HepG2 (cell line): ENCODE measurements at regions of chr9 and their contacts with region 1.

Region 1: DNA sequence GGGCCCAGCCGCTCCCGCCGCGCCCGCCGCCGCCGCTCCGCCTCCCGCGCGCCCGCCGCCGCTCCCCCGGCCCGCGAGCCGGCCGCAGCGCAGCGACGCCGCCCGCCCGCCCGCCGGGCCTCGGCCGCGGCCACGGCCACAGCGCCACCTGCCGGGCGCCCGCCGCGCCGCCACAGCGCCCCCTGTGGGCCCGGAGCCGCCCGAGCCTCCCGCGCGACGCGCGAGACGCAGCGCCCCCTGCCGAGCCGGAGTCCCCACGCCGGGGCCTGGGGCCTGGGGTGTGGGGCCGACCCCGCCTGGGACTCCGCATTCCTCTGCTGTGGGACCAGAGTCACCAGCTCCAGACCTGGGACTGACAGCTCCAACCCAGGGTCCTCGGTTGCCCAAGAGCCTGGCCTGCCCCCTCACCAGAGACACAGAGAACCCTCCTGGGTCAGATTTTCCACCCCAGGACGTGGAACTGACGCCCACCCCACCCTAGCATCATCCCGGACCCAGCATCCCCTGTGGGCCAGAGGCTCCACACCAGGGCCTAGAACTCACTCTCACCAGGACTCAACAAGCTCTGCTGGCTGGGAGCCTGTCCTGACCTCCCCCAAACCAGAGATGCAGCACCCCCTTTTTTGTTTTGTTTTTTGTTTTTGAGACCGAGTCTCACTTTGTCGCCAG is at the start of gene RAPGEF1:
- DNase-seq: no peak
- ATAC-seq: peak; percentile 29
- H3K4me3 ChIP-seq: peak within 1 kb of the TSS; percentile 69 to 82 (median 80)
- H3K27ac ChIP-seq: peak within 1 kb of the TSS; percentile 37
- H3K4me1 ChIP-seq: peaks cover 59% of the 10 kb centered on the region
- H3K27me3 ChIP-seq: no peaks in the 10 kb centered on the region
- CTCF ChIP-seq: peak; percentile 76
- EP300 ChIP-seq: no peak
- POLR2A ChIP-seq: no peak
- RAD21 ChIP-seq: peak; percentile 96
- total RNA-seq, gene RAPGEF1: 21.2 and 21.7 TPM in 2 replicates

Region 2: DNA sequence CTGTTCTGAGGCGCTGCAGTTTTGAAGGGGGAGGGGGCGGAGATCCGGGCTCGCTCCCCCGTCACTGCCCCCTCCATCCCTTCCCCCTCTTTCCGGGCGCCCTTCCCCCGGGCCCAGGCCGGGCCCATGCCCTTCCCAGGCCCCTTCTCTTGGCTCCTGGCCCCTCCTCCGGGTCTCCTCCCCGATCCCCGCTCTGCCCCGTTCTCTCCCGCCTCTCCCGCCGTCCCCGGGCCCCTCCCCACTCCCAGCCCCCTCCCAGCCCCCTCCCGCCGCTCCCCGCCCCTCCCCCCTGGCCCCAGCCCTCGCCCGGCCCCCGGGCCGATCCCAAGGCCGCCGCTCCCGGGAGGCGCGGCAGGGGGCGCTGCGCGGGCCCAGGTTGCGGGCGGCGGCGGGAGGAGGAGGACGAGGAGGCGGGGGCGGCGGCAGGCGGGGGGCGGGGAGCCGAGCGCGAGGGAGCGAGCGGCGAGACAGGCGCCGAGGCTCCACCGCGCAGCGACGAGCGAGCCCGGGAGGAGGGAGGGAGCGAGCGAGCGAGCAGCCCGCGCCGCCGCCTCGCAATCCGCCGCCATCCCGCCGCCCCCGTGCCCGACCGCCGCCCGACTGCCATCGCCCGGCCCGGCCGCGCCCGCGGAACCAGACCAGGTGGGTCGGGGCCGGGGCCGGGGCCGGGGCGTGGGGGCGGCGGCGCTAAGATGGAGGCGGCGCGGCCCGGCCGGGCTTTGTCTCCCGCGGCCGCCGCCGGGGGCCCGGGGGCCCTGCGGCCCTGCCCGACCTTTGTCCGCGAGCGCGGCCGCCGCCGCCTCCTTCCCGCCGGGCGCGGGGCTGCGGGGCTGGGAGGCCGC is 346.3 kb before region 1 on chr9 and contains the start of gene PRRC2B:
- CTCF ChIA-PET with region 1: no interaction called
- POLR2A ChIA-PET with region 1: no interaction called
- in situ Hi-C with region 1: loop called (anchors 25 kb)
- intact Hi-C with region 1: no loop called
- DNase-seq: peak; percentile 67
- ATAC-seq: peak; percentile 74
- H3K4me3 ChIP-seq: peak within 1 kb of the TSS; percentile 73 to 88 (median 74)
- H3K27ac ChIP-seq: peak within 1 kb of the TSS; percentile 85
- H3K4me1 ChIP-seq: peaks cover 61% of the 10 kb centered on the region
- H3K27me3 ChIP-seq: no peaks in the 10 kb centered on the region
- CTCF ChIP-seq: peak; percentile 55; the same call in 1 of the 2 replicates
- EP300 ChIP-seq: no peak; a peak in 1 of 4 replicates
- POLR2A ChIP-seq: peak; percentile 57 to 86; a peak in 3 of 4 replicates
- RAD21 ChIP-seq: peak; percentile 21; the same call in 1 of the 2 replicates
- total RNA-seq, gene PRRC2B: 37.4 TPM in 2 replicates

Region 3: DNA sequence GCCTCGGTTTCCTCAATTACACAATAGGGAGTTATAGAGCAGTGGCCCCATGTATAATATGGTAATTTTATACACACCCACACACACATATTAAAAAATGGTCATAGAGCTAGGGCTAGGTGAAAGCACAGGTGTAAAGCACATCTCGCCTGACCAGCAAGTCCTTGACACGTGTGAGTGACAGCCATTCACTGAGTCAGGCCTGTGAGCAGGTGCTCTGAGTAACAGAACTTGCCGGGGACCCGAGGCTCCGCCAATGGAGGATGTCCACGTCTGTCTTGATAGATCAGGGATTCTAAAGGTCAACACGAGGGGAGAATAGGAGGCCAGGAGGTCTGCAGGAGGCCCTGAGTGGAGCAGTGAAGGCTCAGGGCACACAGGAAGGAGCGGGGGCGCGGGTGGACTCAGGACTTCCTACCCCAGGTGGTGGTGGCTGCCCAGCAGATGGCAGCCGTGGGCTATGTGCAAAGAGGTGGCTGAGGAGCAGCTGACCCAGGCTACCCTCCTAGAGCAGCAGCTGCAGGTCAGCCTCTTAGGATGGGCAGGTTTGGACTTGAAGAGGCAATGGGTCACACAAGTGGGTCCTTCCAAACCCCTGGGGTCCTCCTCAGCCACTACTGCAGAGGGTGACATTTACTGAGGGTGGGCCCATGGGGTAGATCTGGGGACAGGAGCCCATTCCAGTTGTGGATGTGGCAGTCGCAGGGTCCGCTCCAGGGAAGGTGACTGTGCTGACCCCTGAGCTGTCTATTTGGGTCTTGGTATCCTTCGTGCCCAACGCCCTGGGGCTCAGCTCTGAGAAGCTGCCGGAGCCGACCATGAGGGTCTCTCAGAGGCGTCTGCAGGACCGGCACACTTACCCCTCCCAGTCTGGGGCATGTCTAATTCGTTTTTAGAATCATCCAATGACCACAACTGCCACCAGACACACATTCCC is 148.9 kb before region 1 on chr9:
- CTCF ChIA-PET with region 1: interaction called, 185 read pairs
- POLR2A ChIA-PET with region 1: interaction called, 3 read pairs
- in situ Hi-C with region 1: loop called (anchors 5 kb)
- intact Hi-C with region 1: no loop called
- DNase-seq: peak; percentile 61
- ATAC-seq: peak; percentile 94
- H3K4me3 ChIP-seq: no peak overlapping the region
- H3K27ac ChIP-seq: no peak overlapping the region
- H3K4me1 ChIP-seq: peaks cover 14% of the 10 kb centered on the region
- H3K27me3 ChIP-seq: no peaks in the 10 kb centered on the region
- CTCF ChIP-seq: peak; percentile 97
- EP300 ChIP-seq: no peak
- POLR2A ChIP-seq: no peak
- RAD21 ChIP-seq: peak; percentile 96

Region 4: DNA sequence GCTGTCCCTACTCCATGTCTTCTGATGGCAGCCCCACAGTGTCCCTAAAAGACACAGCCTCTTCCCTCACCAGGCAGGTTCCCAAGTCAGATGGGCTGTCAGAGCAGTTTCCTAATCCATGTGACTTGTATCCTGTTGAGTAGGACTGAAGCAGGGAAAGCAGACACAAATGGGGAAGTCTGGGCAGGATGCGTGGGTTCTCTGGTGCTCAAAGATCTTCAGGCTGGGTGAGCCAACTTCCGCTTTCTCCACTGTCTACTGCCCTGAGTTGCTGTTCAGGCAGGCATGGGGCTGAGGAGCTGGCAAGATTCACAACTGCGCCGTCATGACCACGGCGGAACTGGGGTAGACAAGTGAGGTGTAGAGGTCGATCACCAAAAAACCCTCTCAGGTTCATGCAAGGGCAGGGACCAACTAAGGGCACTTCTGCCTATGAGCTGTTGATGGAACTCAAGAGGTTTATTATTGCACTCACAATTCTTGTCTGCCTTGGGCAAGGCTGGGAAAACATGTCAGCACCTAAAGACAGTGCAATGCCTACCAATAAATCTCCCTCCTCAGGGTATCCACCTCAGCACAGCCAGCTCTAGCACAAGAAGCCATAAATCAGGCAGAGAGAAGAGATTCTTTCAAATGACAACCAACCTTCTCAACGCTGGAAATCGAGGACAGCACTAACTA is 83.6 kb before region 1 on chr9:
- CTCF ChIA-PET with region 1: interaction called, 8 read pairs
- POLR2A ChIA-PET with region 1: interaction called, 3 read pairs
- in situ Hi-C with region 1: loop called (anchors 10 kb)
- intact Hi-C with region 1: no loop called
- DNase-seq: no peak
- ATAC-seq: no peak
- H3K4me3 ChIP-seq: no peak overlapping the region
- H3K27ac ChIP-seq: no peak overlapping the region
- H3K4me1 ChIP-seq: peaks cover 51% of the 10 kb centered on the region
- H3K27me3 ChIP-seq: no peaks in the 10 kb centered on the region
- CTCF ChIP-seq: no peak
- EP300 ChIP-seq: no peak
- POLR2A ChIP-seq: no peak
- RAD21 ChIP-seq: no peak

Region 5: GRCh38 chr9:131678499-131679111 is 61.5 kb before region 1 on chr9:
- CTCF ChIA-PET with region 1: interaction called, 12 read pairs
- POLR2A ChIA-PET with region 1: interaction called, 3 read pairs
- in situ Hi-C with region 1: no loop called
- intact Hi-C with region 1: no loop called
- DNase-seq: peak; percentile 56
- ATAC-seq: peak; percentile 89
- H3K4me3 ChIP-seq: no peak overlapping the region
- H3K27ac ChIP-seq: no peak overlapping the region
- H3K4me1 ChIP-seq: peaks cover 61% of the 10 kb centered on the region
- H3K27me3 ChIP-seq: no peaks in the 10 kb centered on the region
- CTCF ChIP-seq: no peak
- EP300 ChIP-seq: no peak
- POLR2A ChIP-seq: no peak
- RAD21 ChIP-seq: no peak

Region 6: GRCh38 chr9:131704141-131704983 is 35.8 kb before region 1 on chr9:
- CTCF ChIA-PET with region 1: interaction called, 10 read pairs
- POLR2A ChIA-PET with region 1: no interaction called
- in situ Hi-C with region 1: no loop called
- intact Hi-C with region 1: loop called (anchors 2 kb)
- DNase-seq: no peak
- ATAC-seq: no peak
- H3K4me3 ChIP-seq: no peak overlapping the region
- H3K27ac ChIP-seq: peak overlapping the region; percentile 79
- H3K4me1 ChIP-seq: peaks cover 59% of the 10 kb centered on the region
- H3K27me3 ChIP-seq: no peaks in the 10 kb centered on the region
- CTCF ChIP-seq: no peak
- EP300 ChIP-seq: no peak
- POLR2A ChIP-seq: no peak
- RAD21 ChIP-seq: no peak